CD4-positive, alpha-beta T cell (primary cell): ENCODE measurements at regions of chr3 and their contacts with region 1.

Region 1: GRCh38 chr3:119463171-119464169 is at the start of gene TMEM39A:
- DNase-seq: peak; percentile 97 to 100 (median 98)
- ATAC-seq: peak; percentile 87
- H3K4me3 ChIP-seq: peak within 1 kb of the TSS; percentile 90
- H3K4me3 Mint-ChIP-seq: peak within 1 kb of the TSS; percentile 93
- H3K27ac ChIP-seq: peak within 1 kb of the TSS; percentile 87 to 93
- H3K27ac Mint-ChIP-seq: peak within 1 kb of the TSS; percentile 97
- H3K4me1 ChIP-seq: peaks cover 28% of the 10 kb centered on the region
- H3K4me1 Mint-ChIP-seq: peaks cover 37% of the 10 kb centered on the region
- H3K27me3 ChIP-seq: no peaks in the 10 kb centered on the region
- H3K27me3 Mint-ChIP-seq: peaks cover 4% of the 10 kb centered on the region
- CTCF ChIP-seq: no peak
- total RNA-seq, gene TMEM39A: 54.1 to 58.0 TPM

Region 2: DNA sequence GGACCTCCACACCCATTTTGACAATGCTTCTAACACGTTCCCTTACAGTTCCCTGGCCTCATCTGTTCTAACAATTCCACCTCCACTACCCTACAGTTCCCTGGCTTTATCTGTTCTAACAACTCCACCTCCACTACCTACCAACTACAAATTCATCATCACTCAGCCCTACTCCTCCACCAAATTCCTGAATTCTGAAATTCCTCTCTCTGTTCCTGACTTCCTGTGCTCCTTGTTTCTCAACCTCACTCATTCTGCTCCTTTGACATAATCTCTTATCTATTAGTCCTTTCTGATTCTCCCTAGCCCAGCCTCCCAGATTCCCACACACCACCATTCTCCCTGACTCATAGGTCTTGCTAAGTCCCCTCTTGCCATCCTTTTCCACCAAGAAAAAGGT is 267.6 kb before region 1 on chr3:
- CTCF ChIA-PET with region 1: no interaction called
- POLR2A ChIA-PET with region 1: no interaction called
- intact Hi-C with region 1: no loop called
- DNase-seq: no peak
- ATAC-seq: no peak
- H3K4me3 ChIP-seq: no peak overlapping the region
- H3K4me3 Mint-ChIP-seq: no peak overlapping the region
- H3K27ac ChIP-seq: no peak overlapping the region
- H3K27ac Mint-ChIP-seq: no peak overlapping the region
- H3K4me1 ChIP-seq: no peaks in the 10 kb centered on the region
- H3K4me1 Mint-ChIP-seq: no peaks in the 10 kb centered on the region
- H3K27me3 ChIP-seq: no peaks in the 10 kb centered on the region
- H3K27me3 Mint-ChIP-seq: peaks cover 5% of the 10 kb centered on the region
- CTCF ChIP-seq: no peak

Region 3: GRCh38 chr3:119227070-119227850 is 236.2 kb before region 1 on chr3:
- CTCF ChIA-PET with region 1: no interaction called
- POLR2A ChIA-PET with region 1: no interaction called
- intact Hi-C with region 1: no loop called
- DNase-seq: no peak
- ATAC-seq: no peak
- H3K4me3 ChIP-seq: no peak overlapping the region
- H3K4me3 Mint-ChIP-seq: no peak overlapping the region
- H3K27ac ChIP-seq: no peak overlapping the region
- H3K27ac Mint-ChIP-seq: peak overlapping the region; percentile 46
- H3K4me1 ChIP-seq: peaks cover 9% of the 10 kb centered on the region
- H3K4me1 Mint-ChIP-seq: peaks cover 86% of the 10 kb centered on the region
- H3K27me3 ChIP-seq: no peaks in the 10 kb centered on the region
- H3K27me3 Mint-ChIP-seq: no peaks in the 10 kb centered on the region
- CTCF ChIP-seq: no peak

Region 4: DNA sequence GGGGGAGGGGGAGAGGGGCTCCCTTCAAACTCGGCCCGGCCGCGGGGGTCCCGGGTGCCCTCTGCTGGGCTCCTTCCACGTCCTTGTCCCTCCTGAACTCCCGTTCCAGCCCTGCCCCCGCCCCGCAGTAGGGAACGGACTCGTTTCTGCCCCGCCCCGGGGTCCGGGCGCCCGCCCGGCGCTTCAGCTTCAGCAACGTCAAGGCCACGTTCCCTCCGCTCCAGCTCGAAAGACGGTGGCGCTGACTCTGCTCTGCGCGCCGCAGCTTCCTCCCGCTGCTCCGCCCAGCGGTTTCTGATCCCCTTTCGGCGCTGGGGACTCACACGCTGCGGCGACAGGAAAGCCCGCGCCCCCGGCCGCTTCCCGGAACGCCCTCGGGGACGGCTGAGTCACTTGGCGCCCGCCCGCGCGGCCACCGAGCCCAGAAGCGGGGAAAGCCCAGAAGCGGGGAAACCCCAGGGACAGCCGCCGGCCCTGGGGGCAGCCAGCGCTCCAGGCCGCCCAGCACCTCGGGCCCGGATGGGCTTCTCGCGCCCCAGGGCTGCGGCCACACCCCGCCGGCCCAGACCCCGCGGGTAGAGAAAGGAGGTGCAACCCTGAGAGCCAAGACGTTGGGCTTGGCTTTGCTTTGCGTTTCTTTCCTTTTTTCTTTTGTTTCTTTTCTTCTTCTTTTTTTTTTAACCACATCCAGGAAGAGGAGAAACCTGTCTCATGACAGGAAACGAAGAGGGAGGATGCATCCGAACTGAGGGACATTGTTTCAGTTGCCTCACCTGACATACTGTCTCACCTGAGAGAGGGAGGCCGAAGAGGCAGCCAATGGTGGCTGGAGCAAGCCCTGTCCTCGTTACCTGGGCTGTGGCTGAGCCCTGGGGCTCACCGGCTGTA is 140.4 kb before region 1 on chr3:
- CTCF ChIA-PET with region 1: no interaction called
- POLR2A ChIA-PET with region 1: interaction called, 11 read pairs
- intact Hi-C with region 1: loop called in 1 of 2 experiments (anchors 10 kb)
- DNase-seq: peak; percentile 70 to 97 (median 84)
- ATAC-seq: peak; percentile 86
- H3K4me3 ChIP-seq: peak overlapping the region; percentile 79
- H3K4me3 Mint-ChIP-seq: peak overlapping the region; percentile 89
- H3K27ac ChIP-seq: peak overlapping the region; percentile 81 to 90
- H3K27ac Mint-ChIP-seq: peak overlapping the region; percentile 96
- H3K4me1 ChIP-seq: peaks cover 23% of the 10 kb centered on the region
- H3K4me1 Mint-ChIP-seq: peaks cover 32% of the 10 kb centered on the region
- H3K27me3 ChIP-seq: no peaks in the 10 kb centered on the region
- H3K27me3 Mint-ChIP-seq: no peaks in the 10 kb centered on the region
- CTCF ChIP-seq: no peak

Region 5: GRCh38 chr3:119559441-119559963 is 96.0 kb after region 1 on chr3 and contains the start of gene CD80:
- CTCF ChIA-PET with region 1: no interaction called
- POLR2A ChIA-PET with region 1: interaction called, 3 read pairs
- intact Hi-C with region 1: loop called in 1 of 2 experiments (anchors 10 kb)
- DNase-seq: peak; percentile 18 to 80 (median 36)
- ATAC-seq: peak; percentile 57
- H3K4me3 ChIP-seq: peak within 1 kb of the TSS; percentile 24
- H3K4me3 Mint-ChIP-seq: no peak within 1 kb of the TSS
- H3K27ac ChIP-seq: no peak within 1 kb of the TSS
- H3K27ac Mint-ChIP-seq: no peak within 1 kb of the TSS
- H3K4me1 ChIP-seq: peaks cover 22% of the 10 kb centered on the region
- H3K4me1 Mint-ChIP-seq: peaks cover 6% of the 10 kb centered on the region
- H3K27me3 ChIP-seq: no peaks in the 10 kb centered on the region
- H3K27me3 Mint-ChIP-seq: no peaks in the 10 kb centered on the region
- CTCF ChIP-seq: peak; percentile 27
- total RNA-seq, gene CD80: 0.17 to 0.41 TPM

Region 6: DNA sequence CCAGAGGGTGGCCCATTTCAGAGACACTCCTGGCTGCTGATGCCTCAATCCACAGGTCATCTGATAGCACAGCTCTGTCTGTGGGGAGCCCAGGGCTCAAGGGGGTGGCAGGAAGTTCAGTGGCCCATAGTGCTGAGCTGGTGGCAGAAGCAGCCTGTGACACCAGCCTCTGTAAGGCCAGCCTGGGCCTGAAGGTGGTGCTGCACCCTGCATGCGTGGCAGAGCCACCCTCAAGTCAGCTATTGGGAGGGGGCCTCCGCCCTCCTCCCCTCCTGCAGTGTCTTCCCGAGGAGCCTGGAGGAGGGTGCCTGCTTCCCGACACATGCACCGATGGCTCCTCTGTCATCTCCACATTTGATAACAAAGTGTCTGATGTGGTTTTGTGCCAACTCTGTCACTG is 137.3 kb after region 1 on chr3:
- CTCF ChIA-PET with region 1: no interaction called
- POLR2A ChIA-PET with region 1: no interaction called
- intact Hi-C with region 1: no loop called
- DNase-seq: peak in 6 of 14 experiments; percentile 2 to 53 (median 14)
- ATAC-seq: peak; percentile 49
- H3K4me3 ChIP-seq: no peak overlapping the region
- H3K4me3 Mint-ChIP-seq: no peak overlapping the region
- H3K27ac ChIP-seq: no peak overlapping the region
- H3K27ac Mint-ChIP-seq: no peak overlapping the region
- H3K4me1 ChIP-seq: peaks cover 16% of the 10 kb centered on the region
- H3K4me1 Mint-ChIP-seq: no peaks in the 10 kb centered on the region
- H3K27me3 ChIP-seq: no peaks in the 10 kb centered on the region
- H3K27me3 Mint-ChIP-seq: no peaks in the 10 kb centered on the region
- CTCF ChIP-seq: no peak

Region 7: GRCh38 chr3:119898478-119899191 is 435.2 kb after region 1 on chr3:
- CTCF ChIA-PET with region 1: no interaction called
- POLR2A ChIA-PET with region 1: no interaction called
- intact Hi-C with region 1: no loop called
- DNase-seq: no peak
- ATAC-seq: no peak
- H3K4me3 ChIP-seq: no peak overlapping the region
- H3K4me3 Mint-ChIP-seq: no peak overlapping the region
- H3K27ac ChIP-seq: no peak overlapping the region
- H3K27ac Mint-ChIP-seq: no peak overlapping the region
- H3K4me1 ChIP-seq: no peaks in the 10 kb centered on the region
- H3K4me1 Mint-ChIP-seq: no peaks in the 10 kb centered on the region
- H3K27me3 ChIP-seq: no peaks in the 10 kb centered on the region
- H3K27me3 Mint-ChIP-seq: no peaks in the 10 kb centered on the region
- CTCF ChIP-seq: no peak

Region 8: DNA sequence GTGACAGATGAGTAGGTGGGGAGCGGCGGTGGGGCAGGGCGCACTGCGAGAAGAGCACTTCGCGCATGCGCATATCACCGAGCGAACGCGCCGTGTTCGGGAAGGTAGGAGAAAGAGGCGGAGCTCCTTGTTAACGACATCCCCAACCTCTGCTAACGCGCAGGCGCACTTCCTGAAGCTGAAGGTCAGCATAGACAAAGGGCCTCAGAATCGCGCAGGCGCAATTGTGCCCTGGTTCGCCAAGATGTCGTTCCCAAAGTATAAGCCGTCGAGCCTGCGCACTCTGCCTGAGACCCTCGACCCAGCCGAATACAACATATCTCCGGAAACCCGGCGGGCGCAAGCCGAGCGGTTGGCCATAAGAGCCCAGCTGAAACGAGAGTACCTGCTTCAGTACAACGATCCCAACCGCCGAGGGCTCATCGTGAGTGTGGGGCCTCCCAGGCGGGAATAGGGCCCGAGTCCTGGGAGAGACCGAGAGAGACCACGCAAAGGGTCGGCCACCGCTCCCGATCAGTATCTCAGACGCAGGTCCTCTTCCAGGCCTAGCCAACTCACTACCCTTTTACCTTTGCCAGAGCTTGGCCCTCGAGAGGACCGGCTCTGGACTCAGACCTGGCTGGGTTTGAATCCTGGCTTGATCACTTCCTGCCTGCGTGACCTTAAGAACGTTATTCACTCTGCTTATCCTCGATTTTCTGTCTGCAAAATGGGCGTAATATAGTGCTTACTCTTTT is 1132.8 kb after region 1 on chr3 and contains the start of gene NDUFB4:
- CTCF ChIA-PET with region 1: no interaction called
- POLR2A ChIA-PET with region 1: no interaction called
- intact Hi-C with region 1: loop called in 1 of 2 experiments (anchors 10 kb)
- DNase-seq: peak; percentile 87 to 99 (median 94)
- ATAC-seq: peak; percentile 87
- H3K4me3 ChIP-seq: peak within 1 kb of the TSS; percentile 88
- H3K4me3 Mint-ChIP-seq: peak within 1 kb of the TSS; percentile 98
- H3K27ac ChIP-seq: peak within 1 kb of the TSS; percentile 94 to 95
- H3K27ac Mint-ChIP-seq: no peak within 1 kb of the TSS
- H3K4me1 ChIP-seq: peaks cover 14% of the 10 kb centered on the region
- H3K4me1 Mint-ChIP-seq: peaks cover 8% of the 10 kb centered on the region
- H3K27me3 ChIP-seq: no peaks in the 10 kb centered on the region
- H3K27me3 Mint-ChIP-seq: no peaks in the 10 kb centered on the region
- CTCF ChIP-seq: no peak
- total RNA-seq, gene NDUFB4: 81.3 to 84.0 TPM